Psoas muscle (tissue), 8 donors: ENCODE measurements at regions of chr15 and their contacts with region 1.

Region 1: GRCh38 chr15:36791844-36792571 is 212.6 kb downstream of the CDIN1 start:
- DNase-seq: peak; percentile 27 to 64
- ATAC-seq: peak; percentile 87 to 98 (median 97)
- H3K4me3 ChIP-seq: no peak overlapping the region
- H3K27ac ChIP-seq: peak overlapping the region; percentile 69
- H3K4me1 ChIP-seq: peaks cover 4% of the 10 kb centered on the region
- H3K27me3 ChIP-seq: no peaks in the 10 kb centered on the region
- CTCF ChIP-seq: no peak

Region 2: DNA sequence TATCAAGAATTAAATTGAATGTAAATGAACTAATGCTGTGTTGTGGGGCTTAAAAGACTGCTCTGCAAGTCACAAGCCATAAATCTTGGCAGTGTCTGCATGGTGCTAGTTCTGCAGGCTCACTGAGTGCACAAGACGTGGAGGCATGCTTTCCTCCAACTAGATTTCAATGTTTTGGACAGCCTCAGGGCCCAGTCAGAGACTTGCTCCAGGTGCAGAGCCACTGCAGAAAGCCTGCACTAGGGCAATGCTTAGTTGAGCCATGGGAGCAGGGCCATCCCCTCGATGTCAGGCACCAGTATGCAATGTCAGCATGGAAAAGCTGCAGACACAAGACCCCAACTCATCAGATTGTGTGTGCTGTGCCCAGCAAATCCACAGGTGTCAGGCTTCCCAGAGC is 447.1 kb before region 1 on chr15:
- intact Hi-C with region 1: loop called in 1 of 2 experiments (anchors 5 kb)
- DNase-seq: no peak
- ATAC-seq: no peak
- H3K4me3 ChIP-seq: no peak overlapping the region
- H3K27ac ChIP-seq: no peak overlapping the region
- H3K4me1 ChIP-seq: no peaks in the 10 kb centered on the region
- H3K27me3 ChIP-seq: no peaks in the 10 kb centered on the region
- CTCF ChIP-seq: no peak